ENCODE measurements at regions of chr12 and their contacts with region 1.

Region 1: DNA sequence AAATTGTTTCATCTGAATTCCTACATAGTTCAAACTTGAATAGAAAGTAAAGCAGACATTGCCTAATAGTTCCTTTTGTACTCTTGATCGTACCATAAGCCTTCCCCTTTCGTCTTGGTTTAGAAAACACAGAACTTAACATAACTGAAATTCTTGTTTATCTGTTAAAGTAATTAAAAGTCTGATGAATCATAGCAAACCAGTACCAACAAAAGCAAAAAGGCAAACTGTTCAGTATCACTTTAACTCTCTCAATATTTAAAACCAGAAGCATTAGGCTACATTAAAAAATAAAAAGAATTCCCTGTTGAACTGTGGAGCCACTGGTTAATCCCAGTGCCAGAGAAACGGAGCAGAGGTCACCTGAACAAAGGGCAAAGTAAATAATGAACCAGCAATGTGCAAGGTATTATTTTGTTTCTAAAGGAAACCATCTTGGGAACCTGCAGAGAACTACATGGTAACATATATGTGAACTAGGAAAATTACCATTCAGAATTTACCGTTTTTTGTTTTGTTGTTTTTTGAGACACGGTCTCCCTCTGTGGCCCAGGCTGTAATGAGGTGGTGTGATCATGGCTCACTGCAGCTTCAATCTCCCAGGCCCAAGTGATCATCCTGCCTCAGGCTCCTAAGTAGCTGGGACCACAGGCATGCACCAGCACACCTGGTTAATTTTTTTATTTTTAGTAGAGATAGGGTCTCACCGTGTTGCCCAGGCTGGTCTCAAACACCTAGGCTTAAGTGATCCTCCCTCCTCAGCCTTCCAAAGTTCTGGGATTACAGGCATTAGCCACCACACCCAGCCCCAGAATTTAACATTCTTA is 17.1 kb upstream of the HIGD1C start:
- DNase-seq: no peak
- H3K4me3 ChIP-seq: no peak overlapping the region
- H3K27ac ChIP-seq: peak overlapping the region; percentile 23
- H3K4me1 ChIP-seq: peaks cover 14% of the 10 kb centered on the region
- H3K27me3 ChIP-seq: no peaks in the 10 kb centered on the region
- CTCF ChIP-seq: no peak

Region 2: DNA sequence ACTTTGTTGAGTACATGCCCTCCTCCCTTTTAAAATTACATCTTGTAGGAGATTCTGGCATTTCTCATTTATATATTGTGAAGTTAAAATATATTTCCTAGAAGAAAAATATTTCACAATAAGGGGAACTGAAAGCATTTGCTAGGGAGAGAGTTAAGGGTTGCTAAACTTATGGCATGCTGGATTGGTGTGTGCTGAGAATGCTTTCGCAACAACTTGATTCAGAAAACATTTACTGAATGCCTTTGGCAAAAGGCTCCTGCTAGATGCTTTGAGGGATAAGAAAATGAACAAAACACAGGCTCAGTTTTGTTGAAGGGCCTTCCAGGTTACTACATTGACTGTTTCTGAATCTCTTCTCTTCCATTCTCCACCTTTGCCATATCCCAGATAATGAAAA is 362.9 kb before region 1 on chr12:
- CTCF ChIA-PET with region 1: no interaction called
- dilution Hi-C with region 1: no loop called
- in situ Hi-C with region 1: no loop called
- intact Hi-C with region 1: no loop called
- DNase-seq: peak; percentile 78
- H3K4me3 ChIP-seq: no peak overlapping the region
- H3K27ac ChIP-seq: peak overlapping the region; percentile 26
- H3K4me1 ChIP-seq: peaks cover 35% of the 10 kb centered on the region
- H3K27me3 ChIP-seq: no peaks in the 10 kb centered on the region
- CTCF ChIP-seq: no peak

Region 3: DNA sequence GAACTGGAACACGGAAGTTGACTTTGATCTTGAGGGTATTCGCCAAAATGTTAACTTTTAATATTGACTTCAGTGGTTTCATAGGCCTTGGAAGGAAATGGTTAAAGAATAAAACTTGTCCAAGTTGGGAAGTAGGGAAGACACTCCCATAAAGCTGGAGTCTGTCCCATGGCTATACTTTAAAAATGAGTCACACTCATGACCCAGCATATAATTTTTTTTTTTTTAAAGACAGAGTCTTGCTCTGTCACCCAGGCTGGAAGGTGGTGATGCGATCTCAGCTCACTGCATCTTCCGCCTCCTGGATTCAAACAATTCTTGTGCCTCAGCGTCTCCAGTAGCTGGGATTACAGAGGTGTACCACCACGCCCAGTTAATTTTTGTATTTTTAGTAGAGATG is 72.9 kb before region 1 on chr12:
- CTCF ChIA-PET with region 1: no interaction called
- dilution Hi-C with region 1: loop called (anchors 5 kb)
- in situ Hi-C with region 1: no loop called
- intact Hi-C with region 1: no loop called
- DNase-seq: peak; percentile 55
- H3K4me3 ChIP-seq: no peak overlapping the region
- H3K27ac ChIP-seq: peak overlapping the region; percentile 19
- H3K4me1 ChIP-seq: peaks cover 4% of the 10 kb centered on the region
- H3K27me3 ChIP-seq: no peaks in the 10 kb centered on the region
- CTCF ChIP-seq: no peak

Region 4: DNA sequence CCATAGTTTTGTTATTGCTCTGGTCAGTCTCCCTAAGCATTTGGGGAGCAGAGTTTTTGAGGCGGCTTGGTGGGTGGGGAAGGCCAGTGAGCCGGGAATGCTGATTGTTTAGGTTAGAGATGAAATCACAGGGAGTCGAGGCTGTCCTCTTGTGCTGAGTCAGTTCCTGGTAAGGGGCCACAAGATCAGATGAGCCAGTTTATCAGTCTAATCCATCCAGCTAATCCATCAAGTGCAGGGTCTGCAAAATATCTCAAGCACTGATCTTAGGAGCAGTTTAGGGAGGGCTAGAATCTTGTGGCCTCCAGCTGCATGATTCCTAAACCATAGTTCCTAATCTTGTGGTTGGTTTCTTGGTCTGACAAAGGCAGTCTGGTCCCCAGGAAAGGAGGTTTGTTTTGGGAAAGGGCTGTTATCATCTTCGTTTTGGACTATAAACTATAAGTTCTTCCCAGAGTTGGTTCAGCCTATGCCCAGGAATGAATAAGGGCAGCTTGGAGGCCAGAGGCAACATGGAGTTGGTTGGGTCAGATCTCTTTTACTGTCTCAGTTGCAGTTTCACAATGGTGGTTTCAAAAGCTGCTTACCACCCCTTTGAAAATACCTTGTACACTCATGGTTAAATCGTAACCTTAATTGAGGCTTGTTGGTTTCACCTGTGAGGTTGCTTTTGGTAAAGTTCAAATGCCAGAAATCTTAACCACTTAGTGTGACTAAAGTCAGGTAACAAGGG is 16.4 kb before region 1 on chr12:
- CTCF ChIA-PET with region 1: no interaction called
- dilution Hi-C with region 1: no loop called
- in situ Hi-C with region 1: no loop called
- intact Hi-C with region 1: no loop called
- DNase-seq: no peak
- H3K4me3 ChIP-seq: no peak overlapping the region
- H3K27ac ChIP-seq: no peak overlapping the region
- H3K4me1 ChIP-seq: peaks cover 11% of the 10 kb centered on the region
- H3K27me3 ChIP-seq: no peaks in the 10 kb centered on the region
- CTCF ChIP-seq: no peak

Region 5: GRCh38 chr12:50971946-50972345 is 36.8 kb after region 1 on chr12:
- CTCF ChIA-PET with region 1: no interaction called
- dilution Hi-C with region 1: no loop called
- in situ Hi-C with region 1: no loop called
- intact Hi-C with region 1: no loop called
- DNase-seq: no peak
- H3K4me3 ChIP-seq: no peak overlapping the region
- H3K27ac ChIP-seq: no peak overlapping the region
- H3K4me1 ChIP-seq: no peaks in the 10 kb centered on the region
- H3K27me3 ChIP-seq: no peaks in the 10 kb centered on the region
- CTCF ChIP-seq: no peak

Region 6: DNA sequence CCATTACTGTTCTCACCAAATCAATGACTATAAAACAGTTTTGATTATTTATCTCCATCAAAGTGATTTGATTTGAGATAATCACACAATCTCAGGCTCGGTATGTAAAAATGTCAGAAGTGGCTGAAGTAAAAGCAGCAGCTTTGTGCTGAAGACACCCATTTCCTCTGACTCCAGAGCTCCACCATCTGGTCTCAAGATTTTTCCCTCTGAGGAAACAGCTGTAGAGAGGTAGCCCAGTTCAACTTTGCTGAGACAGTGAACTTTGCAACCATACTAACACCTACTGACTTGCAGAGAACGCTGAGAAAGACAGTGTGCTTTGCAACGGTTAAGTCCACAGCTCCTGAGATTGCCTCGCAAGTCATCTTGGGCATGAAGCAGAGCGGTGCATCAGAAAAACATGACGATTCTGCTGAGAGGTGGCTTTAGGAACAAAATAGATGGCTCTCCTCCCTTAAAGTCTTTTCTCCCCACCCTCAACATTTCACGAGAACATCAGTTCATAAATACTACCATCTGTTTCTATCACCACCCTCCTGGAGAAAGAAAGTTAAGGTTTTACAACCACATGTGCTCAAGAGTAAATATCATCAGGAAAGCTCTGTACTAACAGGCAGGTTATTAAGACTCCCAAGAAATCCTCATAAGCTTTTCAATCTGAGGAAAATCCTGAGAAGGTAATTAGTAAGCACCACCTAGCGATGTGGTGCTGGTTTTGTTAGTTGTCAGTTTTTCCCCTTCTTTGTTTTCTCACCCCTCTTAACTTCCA is 52.0 kb after region 1 on chr12:
- CTCF ChIA-PET with region 1: no interaction called
- dilution Hi-C with region 1: loop called (anchors 5 kb)
- in situ Hi-C with region 1: no loop called
- intact Hi-C with region 1: no loop called
- DNase-seq: peak; percentile 32
- H3K4me3 ChIP-seq: no peak overlapping the region
- H3K27ac ChIP-seq: no peak overlapping the region
- H3K4me1 ChIP-seq: peaks cover 7% of the 10 kb centered on the region
- H3K27me3 ChIP-seq: no peaks in the 10 kb centered on the region
- CTCF ChIP-seq: peak; percentile 31 to 79

Region 7: GRCh38 chr12:51156245-51156765 is 221.1 kb after region 1 on chr12:
- CTCF ChIA-PET with region 1: no interaction called
- dilution Hi-C with region 1: no loop called
- in situ Hi-C with region 1: no loop called
- intact Hi-C with region 1: no loop called
- DNase-seq: peak; percentile 5
- H3K4me3 ChIP-seq: no peak overlapping the region
- H3K27ac ChIP-seq: no peak overlapping the region
- H3K4me1 ChIP-seq: no peaks in the 10 kb centered on the region
- H3K27me3 ChIP-seq: no peaks in the 10 kb centered on the region
- CTCF ChIP-seq: no peak